HEK293 (cell line): ENCODE measurements at regions of chr15 and their contacts with region 1.

Region 1: GRCh38 chr15:89494935-89495637 is 1.3 kb downstream of the RHCG start:
- H3K4me3 ChIP-seq: no peak overlapping the region
- H3K27ac ChIP-seq: no peak overlapping the region
- H3K4me1 ChIP-seq: no peaks in the 10 kb centered on the region
- CTCF ChIP-seq: no peak; the same call in 1 of the 2 replicates

Region 2: GRCh38 chr15:89307046-89307587 is 188.0 kb before region 1 on chr15:
- CTCF ChIA-PET with region 1: no interaction called
- POLR2A ChIA-PET with region 1: no interaction called
- H3K4me3 ChIP-seq: no peak overlapping the region
- H3K27ac ChIP-seq: no peak overlapping the region
- H3K4me1 ChIP-seq: no peaks in the 10 kb centered on the region
- CTCF ChIP-seq: no peak

Region 3: DNA sequence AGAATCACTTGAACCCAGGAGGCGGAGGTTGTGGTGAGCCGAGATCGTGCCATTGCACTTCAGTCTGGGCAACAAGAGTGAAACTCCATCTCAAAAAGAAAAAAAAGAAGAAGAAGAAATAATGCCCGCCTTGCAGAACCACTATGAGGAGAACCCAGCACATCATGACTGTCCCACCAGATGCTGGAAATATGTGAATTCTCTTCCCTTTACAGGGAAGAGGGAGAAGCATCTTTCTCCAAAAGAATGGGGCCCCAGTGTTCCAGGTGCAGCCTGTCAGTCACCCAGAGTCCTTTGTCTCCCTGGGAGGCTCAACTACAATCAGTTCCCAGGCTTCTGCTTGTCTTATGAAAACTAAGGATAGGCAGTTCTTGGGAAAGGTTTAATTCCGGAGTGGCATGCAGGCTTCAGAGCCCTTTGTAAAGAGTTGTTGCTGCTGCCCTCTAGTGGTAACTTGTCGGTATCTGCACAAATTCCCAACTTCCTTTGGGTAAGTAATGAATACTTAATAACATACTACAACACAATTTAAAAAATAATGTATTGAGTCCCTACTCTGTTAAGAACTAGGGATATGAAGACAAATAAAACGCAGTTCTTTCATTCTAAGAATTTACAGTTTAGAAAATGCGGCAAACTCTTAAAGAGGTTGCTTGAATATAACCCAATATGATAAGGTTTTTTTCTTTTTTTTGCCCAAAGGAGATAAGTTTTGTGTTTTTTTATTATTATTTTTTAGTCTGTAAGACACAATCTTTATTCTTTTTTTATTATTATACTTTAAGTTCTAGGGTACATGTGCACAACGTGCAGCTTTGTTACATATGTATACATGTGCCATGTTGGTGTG is 61.6 kb after region 1 on chr15:
- CTCF ChIA-PET with region 1: interaction called, 28 read pairs
- POLR2A ChIA-PET with region 1: no interaction called
- H3K4me3 ChIP-seq: no peak overlapping the region
- H3K27ac ChIP-seq: no peak overlapping the region
- H3K4me1 ChIP-seq: no peaks in the 10 kb centered on the region
- CTCF ChIP-seq: peak; percentile 21; the same call in 1 of the 2 replicates